ENCODE measurements at regions of chr3 and their contacts with region 1.

Region 1: DNA sequence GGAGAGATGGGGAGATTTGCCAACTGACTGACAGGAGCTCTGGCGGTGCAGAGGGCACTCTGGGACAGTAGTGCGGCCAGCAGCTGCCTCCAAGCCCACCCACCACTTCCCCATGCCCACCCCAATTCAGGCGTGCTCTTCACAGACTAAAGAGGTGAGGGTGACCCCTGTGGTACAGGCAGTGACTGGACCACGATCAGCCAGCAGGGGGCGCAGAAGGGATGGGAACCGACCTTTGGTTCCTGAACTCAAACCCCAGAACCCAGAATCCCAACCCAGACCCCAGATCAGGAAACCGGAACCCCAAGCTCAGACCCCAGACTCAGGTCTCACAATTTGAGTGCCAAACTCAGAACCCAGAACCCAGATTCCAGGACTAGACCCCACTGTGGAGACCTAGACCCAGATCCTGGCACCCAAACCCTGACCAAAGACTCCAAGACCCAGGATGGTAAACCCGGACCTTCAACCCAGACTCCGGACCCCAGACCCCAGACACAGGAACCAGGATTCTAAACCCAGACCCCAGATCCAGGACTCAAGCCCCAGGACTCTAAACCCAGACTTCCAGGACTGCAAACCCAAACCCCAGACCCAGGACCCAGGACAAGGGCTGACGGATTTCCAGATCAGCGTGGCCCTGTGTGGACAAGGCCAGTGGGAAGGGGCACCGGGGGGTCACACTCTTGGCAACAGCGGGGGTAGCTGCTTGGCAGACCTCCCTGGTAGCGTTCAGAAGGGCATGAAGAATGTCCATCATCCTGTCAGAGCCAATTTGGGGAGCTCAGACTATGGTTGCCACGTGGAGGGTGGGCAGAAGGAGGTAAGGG is 3.7 kb upstream of the MYL3 start:
- DNase-seq: peak; percentile 56
- H3K4me3 Mint-ChIP-seq: no peak overlapping the region
- H3K27ac Mint-ChIP-seq: no peak overlapping the region
- H3K4me1 Mint-ChIP-seq: no peaks in the 10 kb centered on the region
- H3K27me3 Mint-ChIP-seq: peaks cover 7% of the 10 kb centered on the region

Region 2: DNA sequence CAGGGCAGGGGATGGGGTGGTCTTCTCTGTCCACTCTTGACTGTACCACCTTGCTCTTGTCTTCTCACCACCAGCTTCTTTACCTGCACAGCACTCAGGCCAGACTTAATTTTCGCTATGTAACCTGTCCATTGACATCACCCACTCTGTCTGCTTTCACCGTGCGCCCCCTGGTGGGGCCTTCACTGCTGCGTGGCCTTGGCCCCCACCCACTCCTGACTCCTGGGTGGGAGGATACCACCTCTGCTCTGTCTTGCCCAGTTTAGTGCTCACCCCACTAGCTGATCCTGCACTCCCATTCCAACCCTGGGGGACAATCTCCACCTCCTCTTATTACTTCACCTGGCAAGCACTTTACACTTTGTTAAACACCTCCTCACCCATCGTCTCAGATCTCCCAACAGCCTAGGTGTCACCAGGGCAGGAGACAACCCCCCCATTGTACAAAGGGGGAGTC is 28.3 kb after region 1 on chr3:
- intact Hi-C with region 1: loop called (anchors 1 kb)
- DNase-seq: peak; percentile 61
- H3K4me3 Mint-ChIP-seq: no peak overlapping the region
- H3K27ac Mint-ChIP-seq: no peak overlapping the region
- H3K4me1 Mint-ChIP-seq: peaks cover 4% of the 10 kb centered on the region
- H3K27me3 Mint-ChIP-seq: peaks cover 55% of the 10 kb centered on the region

Region 3: GRCh38 chr3:46909535-46910442 is 42.9 kb after region 1 on chr3:
- intact Hi-C with region 1: loop called (anchors 1 kb)
- DNase-seq: peak; percentile 61
- H3K4me3 Mint-ChIP-seq: no peak overlapping the region
- H3K27ac Mint-ChIP-seq: no peak overlapping the region
- H3K4me1 Mint-ChIP-seq: peaks cover 15% of the 10 kb centered on the region
- H3K27me3 Mint-ChIP-seq: no peaks in the 10 kb centered on the region

Region 4: DNA sequence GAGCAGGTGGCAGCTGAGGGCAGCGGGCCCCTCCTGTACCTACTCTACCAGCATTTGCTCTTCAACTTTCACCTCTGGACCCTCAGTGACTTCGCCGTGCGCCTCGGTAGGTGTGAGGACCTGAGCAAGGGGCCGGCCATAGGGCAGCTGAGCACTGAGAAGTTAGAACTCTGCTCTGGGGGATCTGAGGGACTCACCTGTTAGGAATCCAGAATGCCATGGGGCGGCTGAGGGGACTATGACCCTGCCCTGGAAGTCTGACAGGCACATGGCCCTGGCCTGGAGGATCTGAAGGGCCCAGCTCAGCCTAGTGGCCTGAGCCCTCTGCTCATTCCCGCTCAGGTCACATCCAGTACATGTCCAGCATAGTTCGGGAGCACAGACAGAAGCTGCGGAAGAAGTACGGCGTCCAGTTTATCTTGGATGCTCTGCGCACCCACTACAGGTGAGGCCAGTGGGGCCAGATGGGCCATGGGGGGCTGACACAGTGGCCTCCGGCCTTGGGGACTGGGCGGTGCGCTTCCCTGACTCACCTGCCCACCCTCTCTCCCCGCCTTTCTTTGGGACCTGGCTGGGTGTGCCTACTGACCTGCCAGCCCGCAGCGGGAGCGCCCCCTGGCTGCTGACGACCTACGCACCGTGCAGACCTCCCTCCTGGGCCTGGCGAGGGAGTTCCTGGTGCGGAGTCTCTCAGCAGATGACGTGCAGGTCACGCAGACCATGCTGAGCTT is 131.4 kb after region 1 on chr3:
- intact Hi-C with region 1: loop called (anchors 2 kb)
- DNase-seq: peak; percentile 47
- H3K4me3 Mint-ChIP-seq: no peak overlapping the region
- H3K27ac Mint-ChIP-seq: no peak overlapping the region
- H3K4me1 Mint-ChIP-seq: peaks cover 7% of the 10 kb centered on the region
- H3K27me3 Mint-ChIP-seq: no peaks in the 10 kb centered on the region

Region 5: DNA sequence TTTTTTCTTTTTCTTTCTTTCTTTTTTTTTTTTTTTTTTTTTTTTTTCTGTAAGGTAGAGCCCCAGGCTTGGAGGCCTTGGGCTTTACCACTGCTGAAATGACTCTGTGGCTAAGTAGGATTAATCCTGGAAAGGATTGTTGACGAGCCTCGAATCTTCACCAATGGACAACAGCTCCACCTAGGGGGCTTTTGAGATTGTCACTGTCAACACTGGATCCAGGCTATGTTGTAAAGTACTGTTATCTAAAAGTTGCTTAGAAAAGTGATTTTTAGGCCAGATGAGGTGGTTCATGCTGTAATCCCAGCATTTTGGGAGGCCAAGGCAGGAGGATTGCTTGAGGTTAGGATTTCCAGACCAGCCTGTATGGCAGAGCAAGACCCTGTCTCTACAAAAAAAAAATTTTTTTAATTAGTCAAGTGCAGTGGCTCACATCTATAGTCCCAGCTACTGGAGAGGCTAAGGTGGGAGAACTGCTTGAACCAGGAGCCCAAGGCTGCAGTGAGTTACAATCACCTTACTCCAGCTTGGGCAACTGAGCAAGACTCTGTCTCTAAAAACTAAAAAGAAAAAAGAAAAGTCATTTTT is 457.4 kb after region 1 on chr3:
- intact Hi-C with region 1: loop called (anchors 1 kb)
- DNase-seq: peak; percentile 23
- H3K4me3 Mint-ChIP-seq: no peak overlapping the region
- H3K27ac Mint-ChIP-seq: no peak overlapping the region
- H3K4me1 Mint-ChIP-seq: no peaks in the 10 kb centered on the region
- H3K27me3 Mint-ChIP-seq: no peaks in the 10 kb centered on the region

Region 6: DNA sequence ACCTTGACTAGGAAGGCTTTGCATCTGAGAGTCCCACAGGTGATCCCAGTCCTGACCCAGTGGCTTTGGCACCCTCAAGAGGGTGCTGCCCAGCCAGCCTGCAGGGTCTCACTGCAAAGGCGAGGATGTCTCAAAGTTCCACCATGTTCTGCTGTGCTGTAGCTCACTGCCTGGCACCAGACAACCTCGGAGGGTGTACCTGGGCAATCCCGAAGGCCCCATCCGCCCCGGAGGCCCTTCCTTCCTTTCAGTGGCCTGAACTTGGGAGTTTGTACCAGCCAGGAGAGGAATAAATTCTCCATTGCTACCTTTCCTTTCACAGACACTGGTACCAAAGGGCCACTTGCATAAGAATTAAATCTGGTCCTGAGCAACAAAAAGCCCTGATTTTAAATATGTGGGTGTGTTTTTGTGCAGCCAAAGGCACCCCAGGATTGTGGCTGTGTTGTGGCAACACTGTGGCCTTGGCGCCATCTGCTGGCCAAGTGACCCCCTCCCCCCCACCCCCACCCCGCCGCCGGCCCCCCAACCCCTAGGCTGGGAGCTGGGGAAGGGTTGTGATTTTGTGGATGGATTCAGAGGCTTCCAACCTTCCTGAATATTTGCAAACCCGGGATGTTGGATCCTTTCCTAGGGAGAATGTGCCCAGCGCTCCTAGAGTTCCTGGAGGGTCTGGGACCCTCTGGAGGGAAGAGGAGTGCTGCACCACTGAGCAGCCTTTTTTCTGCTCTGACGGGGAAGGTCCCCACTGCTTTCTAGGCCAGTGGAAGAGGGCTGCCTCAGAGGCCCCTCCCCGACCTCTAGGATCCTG is 504.2 kb after region 1 on chr3:
- intact Hi-C with region 1: loop called (anchors 2 kb)
- DNase-seq: no peak
- H3K4me3 Mint-ChIP-seq: no peak overlapping the region
- H3K27ac Mint-ChIP-seq: no peak overlapping the region
- H3K4me1 Mint-ChIP-seq: no peaks in the 10 kb centered on the region
- H3K27me3 Mint-ChIP-seq: peaks cover 15% of the 10 kb centered on the region